ENCODE measurements at regions of chr15 and their contacts with region 1.

Region 1: GRCh38 chr15:64067564-64068030 is 21.3 kb upstream of the DAPK2 start:
- DNase-seq: peak in 2 of 3 donors; percentile 35 to 84
- ATAC-seq: peak; percentile 84
- H3K4me3 ChIP-seq: no peak overlapping the region
- H3K4me1 ChIP-seq: peaks cover 6% of the 10 kb centered on the region
- CTCF ChIP-seq: peak; percentile 63

Region 2: GRCh38 chr15:63891079-63891767 is 176.4 kb before region 1 on chr15:
- intact Hi-C with region 1: loop called in 1 of 2 experiments (anchors 5 kb)
- DNase-seq: peak; percentile 79 to 93 (median 88)
- ATAC-seq: peak; percentile 87
- H3K4me3 ChIP-seq: no peak overlapping the region
- H3K4me1 ChIP-seq: peaks cover 7% of the 10 kb centered on the region
- CTCF ChIP-seq: peak; percentile 51

Region 3: DNA sequence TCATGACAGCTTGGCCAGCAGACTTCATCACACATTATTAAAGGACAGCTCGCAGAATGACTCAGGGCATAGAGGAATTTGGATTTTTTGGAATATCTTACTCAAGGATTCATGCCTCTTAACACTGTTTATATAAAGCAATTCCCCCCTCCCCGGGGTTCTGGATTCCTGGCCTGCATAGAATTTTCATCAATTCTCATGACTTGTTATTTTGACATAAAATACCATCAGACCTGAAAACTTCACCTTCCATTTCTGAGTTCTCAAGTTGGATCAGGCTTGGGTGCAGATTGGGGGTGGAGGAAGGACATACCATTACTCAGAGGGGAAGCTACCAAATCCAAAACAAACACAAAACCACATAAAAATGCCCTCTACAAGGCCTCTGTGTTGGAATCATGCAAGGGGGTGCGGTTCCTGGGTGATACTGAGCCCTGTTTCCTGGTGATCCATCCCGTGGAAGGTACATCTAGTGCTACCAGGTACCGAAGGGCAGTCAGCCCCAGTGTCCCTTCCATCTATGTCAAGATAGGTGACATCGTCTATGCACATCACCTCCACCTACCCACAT is 116.6 kb before region 1 on chr15:
- intact Hi-C with region 1: no loop called
- DNase-seq: no peak
- ATAC-seq: peak; percentile 11
- H3K4me3 ChIP-seq: no peak overlapping the region
- H3K4me1 ChIP-seq: peaks cover 2% of the 10 kb centered on the region
- CTCF ChIP-seq: no peak

Measured in mucosa of descending colon (tissue), 3 donors.